ENCODE measurements at regions of chr1 and their contacts with region 1.

Region 1: GRCh38 chr1:39653546-39654031 is 14.1 kb upstream of the HEYL start:
- DNase-seq: peak; percentile 64
- H3K4me3 ChIP-seq: no peak overlapping the region
- H3K27ac ChIP-seq: peak overlapping the region in 1 of 2 experiments; percentile 100; a peak in 2 of 4 replicates
- H3K4me1 ChIP-seq: peaks cover 0 to 62% of the 10 kb centered on the region in 2 experiments; a peak in 2 of 4 replicates
- H3K27me3 ChIP-seq: no peaks in the 10 kb centered on the region
- CTCF ChIP-seq: peak; percentile 87
- EP300 ChIP-seq: no peak
- RAD21 ChIP-seq: peak; percentile 92

Region 2: DNA sequence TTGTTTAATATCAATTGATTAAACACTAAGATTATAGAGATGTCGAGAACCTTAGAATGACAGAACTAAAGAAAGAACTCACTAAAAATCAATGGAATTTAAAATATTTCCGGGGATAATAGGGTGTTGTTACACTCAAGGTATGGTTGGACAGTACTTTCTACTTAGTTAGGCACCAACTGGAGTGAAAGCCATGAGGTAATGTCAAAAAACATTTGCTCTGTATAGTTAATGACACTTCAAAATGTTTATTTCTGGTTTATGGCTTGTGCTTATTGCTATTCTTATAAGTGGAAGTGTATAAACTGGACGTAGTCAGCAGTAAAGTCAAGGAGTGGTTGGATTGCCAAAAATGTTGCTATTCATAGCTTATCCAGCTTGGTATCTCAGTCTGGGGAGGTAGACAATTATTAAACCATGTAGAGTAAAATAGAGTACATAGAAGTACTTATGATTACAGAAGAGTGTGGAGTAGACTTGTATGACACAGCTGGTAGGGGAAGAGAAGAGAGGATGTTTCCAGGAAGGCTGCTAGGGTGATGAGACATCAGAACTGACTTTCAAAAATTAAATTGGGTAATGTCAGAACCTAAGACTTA is 218.7 kb before region 1 on chr1:
- CTCF ChIA-PET with region 1: no interaction called
- POLR2A ChIA-PET with region 1: no interaction called
- DNase-seq: no peak
- H3K4me3 ChIP-seq: no peak overlapping the region
- H3K27ac ChIP-seq: no peak overlapping the region
- H3K4me1 ChIP-seq: no peaks in the 10 kb centered on the region
- H3K27me3 ChIP-seq: no peaks in the 10 kb centered on the region
- CTCF ChIP-seq: no peak
- EP300 ChIP-seq: no peak
- RAD21 ChIP-seq: no peak

Region 3: GRCh38 chr1:39609618-39610331 is 43.8 kb before region 1 on chr1:
- CTCF ChIA-PET with region 1: interaction called, 459 read pairs
- POLR2A ChIA-PET with region 1: interaction called, 6 read pairs
- DNase-seq: peak; percentile 65
- H3K4me3 ChIP-seq: no peak overlapping the region
- H3K27ac ChIP-seq: no peak overlapping the region
- H3K4me1 ChIP-seq: no peaks in the 10 kb centered on the region; a peak in 1 of 4 replicates
- H3K27me3 ChIP-seq: no peaks in the 10 kb centered on the region
- CTCF ChIP-seq: peak; percentile 52
- EP300 ChIP-seq: no peak
- RAD21 ChIP-seq: no peak

Region 4: GRCh38 chr1:39632682-39633417 is 20.7 kb before region 1 on chr1:
- CTCF ChIA-PET with region 1: interaction called, 17 read pairs
- POLR2A ChIA-PET with region 1: interaction called, 5 read pairs
- DNase-seq: no peak
- H3K4me3 ChIP-seq: no peak overlapping the region
- H3K27ac ChIP-seq: peak overlapping the region in 1 of 2 experiments; percentile 55; a peak in 2 of 4 replicates
- H3K4me1 ChIP-seq: peaks cover 0 to 24% of the 10 kb centered on the region in 2 experiments; a peak in 2 of 4 replicates
- H3K27me3 ChIP-seq: no peaks in the 10 kb centered on the region; the same call in 1 of the 2 replicates
- CTCF ChIP-seq: no peak
- EP300 ChIP-seq: no peak
- RAD21 ChIP-seq: no peak

Region 5: DNA sequence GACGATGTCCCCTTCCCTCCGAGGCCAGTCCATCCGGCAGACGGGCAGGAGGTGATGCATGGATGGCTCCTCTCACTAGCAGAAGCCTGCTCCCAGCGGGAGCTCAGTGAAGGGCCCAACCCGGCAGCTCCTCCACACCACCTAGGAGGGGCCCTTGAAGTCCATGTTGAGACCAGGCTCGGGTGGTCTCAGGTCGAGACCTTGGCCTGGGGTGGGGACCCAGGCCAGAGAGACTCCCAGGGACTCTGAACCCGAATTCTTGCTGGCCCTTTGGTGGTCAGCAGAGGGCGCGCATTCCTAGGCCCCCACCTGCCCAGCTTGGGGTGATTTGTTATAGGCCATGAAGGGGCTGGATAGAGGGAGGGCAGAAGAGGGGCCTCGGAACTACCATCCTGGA is 19.0 kb after region 1 on chr1:
- CTCF ChIA-PET with region 1: interaction called, 260 read pairs
- POLR2A ChIA-PET with region 1: interaction called, 95 read pairs
- DNase-seq: peak; percentile 77
- H3K4me3 ChIP-seq: peak overlapping the region; percentile 57 to 63
- H3K27ac ChIP-seq: peak overlapping the region in 1 of 2 experiments; percentile 87; a peak in 2 of 4 replicates
- H3K4me1 ChIP-seq: peaks cover 0 to 27% of the 10 kb centered on the region in 2 experiments; a peak in 1 of 4 replicates
- H3K27me3 ChIP-seq: peaks cover 44% of the 10 kb centered on the region
- CTCF ChIP-seq: peak; percentile 72
- EP300 ChIP-seq: no peak
- RAD21 ChIP-seq: peak; percentile 44

Region 6: GRCh38 chr1:39701049-39701439 is 47.5 kb after region 1 on chr1:
- CTCF ChIA-PET with region 1: interaction called, 42 read pairs
- POLR2A ChIA-PET with region 1: interaction called, 7 read pairs
- DNase-seq: no peak
- H3K4me3 ChIP-seq: no peak overlapping the region
- H3K27ac ChIP-seq: no peak overlapping the region
- H3K4me1 ChIP-seq: peaks cover 0 to 17% of the 10 kb centered on the region in 2 experiments; a peak in 1 of 4 replicates
- H3K27me3 ChIP-seq: peaks cover 17% of the 10 kb centered on the region; the same call in 1 of the 2 replicates
- CTCF ChIP-seq: no peak
- EP300 ChIP-seq: no peak
- RAD21 ChIP-seq: no peak

Region 7: GRCh38 chr1:39720094-39720999 is 66.8 kb after region 1 on chr1:
- CTCF ChIA-PET with region 1: interaction called, 30 read pairs
- POLR2A ChIA-PET with region 1: no interaction called
- DNase-seq: peak; percentile 48
- H3K4me3 ChIP-seq: no peak overlapping the region; a peak in 1 of 4 replicates
- H3K27ac ChIP-seq: no peak overlapping the region
- H3K4me1 ChIP-seq: peaks cover 0 to 2% of the 10 kb centered on the region in 2 experiments; a peak in 1 of 4 replicates
- H3K27me3 ChIP-seq: peaks cover 10% of the 10 kb centered on the region; the same call in 1 of the 2 replicates
- CTCF ChIP-seq: peak; percentile 84
- EP300 ChIP-seq: no peak
- RAD21 ChIP-seq: peak; percentile 88